PC-9 (cell line): ENCODE measurements at regions of chr17 and their contacts with region 1.

Region 1: GRCh38 chr17:72407336-72407909 is 286.6 kb downstream of the SOX9 start:
- DNase-seq: peak; percentile 90 to 98
- H3K4me3 ChIP-seq: peak overlapping the region; percentile 43; the same call in 1 of the 2 replicates
- H3K27ac ChIP-seq: peak overlapping the region; percentile 99
- H3K4me1 ChIP-seq: peaks cover 71% of the 10 kb centered on the region
- H3K27me3 ChIP-seq: no peaks in the 10 kb centered on the region
- CTCF ChIP-seq: no peak

Region 2: DNA sequence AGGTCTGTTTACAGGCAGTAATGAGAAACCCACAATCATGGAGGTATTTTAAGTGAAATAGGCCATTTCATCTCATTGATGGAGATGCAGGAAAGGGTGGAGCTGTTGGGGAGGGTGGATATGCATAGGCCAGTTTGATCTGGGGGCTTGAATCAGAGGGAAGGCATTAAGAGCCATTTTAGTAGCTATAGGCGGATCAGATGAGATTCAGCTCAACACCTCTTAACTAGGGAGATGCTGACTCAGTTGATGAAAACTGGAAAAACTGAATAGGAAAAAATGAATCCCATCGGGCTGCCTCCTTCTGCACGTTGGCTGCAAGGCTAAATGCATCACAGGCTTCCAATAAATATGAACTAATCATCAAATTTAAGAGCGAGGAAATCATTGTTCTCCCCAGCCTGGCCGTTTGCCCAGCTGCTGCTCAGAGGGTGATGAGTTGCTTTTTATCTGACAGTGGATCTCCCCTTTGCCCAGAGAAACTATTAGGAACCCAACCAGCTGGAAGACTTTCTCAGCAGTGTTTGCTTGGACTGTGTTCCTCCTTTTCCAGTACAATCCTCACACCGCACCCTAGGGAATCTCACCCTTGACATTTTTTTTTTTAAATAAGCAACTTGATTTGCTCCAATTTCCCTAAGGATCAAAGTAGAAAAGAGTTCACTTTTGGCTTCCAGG is 137.0 kb before region 1 on chr17:
- CTCF ChIA-PET with region 1: no interaction called
- POLR2A ChIA-PET with region 1: no interaction called
- intact Hi-C with region 1: loop called (anchors 5 kb)
- DNase-seq: peak; percentile 62 to 82
- H3K4me3 ChIP-seq: no peak overlapping the region
- H3K27ac ChIP-seq: 0 out of 2 replicates have a peak overlapping the region, but pooled peaks have one; percentile 13
- H3K4me1 ChIP-seq: peaks cover 35% of the 10 kb centered on the region
- H3K27me3 ChIP-seq: no peaks in the 10 kb centered on the region
- CTCF ChIP-seq: no peak

Region 3: DNA sequence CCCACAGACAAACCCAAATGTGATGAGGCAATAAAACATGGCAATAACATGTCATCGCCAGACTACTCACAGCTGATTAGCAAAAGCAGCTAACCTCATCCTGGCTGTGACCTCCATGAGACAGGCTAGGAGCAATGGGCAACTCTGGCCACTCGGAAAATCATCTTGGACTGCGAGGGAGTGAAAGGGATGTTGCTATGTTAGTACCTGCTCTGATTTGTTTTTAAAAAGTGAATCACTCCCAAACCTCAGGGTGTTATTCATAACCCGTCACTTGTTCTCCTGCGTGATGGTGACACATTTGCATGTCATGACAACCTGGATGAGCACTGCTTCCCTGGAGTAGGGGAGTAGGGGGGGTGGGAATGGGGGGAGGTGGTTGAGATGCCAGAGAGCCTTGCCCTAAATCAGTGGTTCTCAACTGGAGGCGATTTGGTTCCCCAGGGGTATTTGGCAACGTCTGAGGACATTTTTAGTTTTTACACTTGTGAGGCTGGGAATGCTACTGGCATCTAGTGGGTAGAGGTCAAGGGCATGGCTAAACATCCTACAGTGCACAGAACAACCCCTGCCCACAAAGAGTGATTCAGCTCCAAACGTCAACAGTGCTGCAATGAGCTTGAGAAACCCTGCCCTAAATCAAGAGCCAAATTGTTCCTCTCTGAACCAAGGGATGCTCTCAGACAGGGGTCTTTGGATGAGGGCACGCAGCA is 44.9 kb before region 1 on chr17:
- CTCF ChIA-PET with region 1: no interaction called
- POLR2A ChIA-PET with region 1: interaction called, 3 read pairs
- intact Hi-C with region 1: loop called (anchors 1 kb)
- DNase-seq: peak in 1 of 2 experiments; percentile 79
- H3K4me3 ChIP-seq: no peak overlapping the region
- H3K27ac ChIP-seq: peak overlapping the region; percentile 41
- H3K4me1 ChIP-seq: peaks cover 44% of the 10 kb centered on the region
- H3K27me3 ChIP-seq: no peaks in the 10 kb centered on the region
- CTCF ChIP-seq: no peak

Region 4: DNA sequence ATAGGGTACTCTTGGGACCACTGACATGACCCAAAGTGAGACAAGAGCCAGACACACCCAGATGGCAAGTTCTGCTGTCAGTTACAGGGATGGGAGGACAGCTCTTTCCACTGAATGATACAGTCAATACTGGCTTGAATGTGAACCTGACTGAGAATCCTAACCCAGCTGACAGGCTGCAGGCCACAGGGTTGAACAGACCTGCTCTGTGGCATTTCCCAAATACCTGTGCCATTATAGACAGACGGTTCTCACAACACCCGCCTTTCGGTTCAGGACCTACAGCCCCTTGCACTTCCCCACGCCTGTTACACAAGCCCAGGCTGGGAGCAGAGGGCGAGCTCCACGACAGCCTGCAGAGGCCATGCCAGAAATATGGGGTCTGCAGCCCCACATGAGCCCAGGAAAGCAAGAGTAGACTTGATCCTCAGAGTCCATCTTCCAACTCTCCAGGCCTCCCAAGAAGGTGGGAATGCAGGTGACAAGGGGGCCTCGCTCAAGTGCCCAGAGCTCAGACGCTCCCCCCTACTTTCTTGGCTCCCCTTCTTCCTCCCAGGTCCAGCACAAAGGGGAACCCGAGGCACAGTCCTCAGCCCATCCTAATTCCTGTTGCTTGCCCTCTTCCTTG is 27.7 kb after region 1 on chr17:
- CTCF ChIA-PET with region 1: interaction called, 5 read pairs
- POLR2A ChIA-PET with region 1: interaction called, 15 read pairs
- intact Hi-C with region 1: no loop called
- DNase-seq: peak; percentile 46 to 81
- H3K4me3 ChIP-seq: no peak overlapping the region
- H3K27ac ChIP-seq: peak overlapping the region; percentile 53
- H3K4me1 ChIP-seq: peaks cover 23% of the 10 kb centered on the region
- H3K27me3 ChIP-seq: no peaks in the 10 kb centered on the region
- CTCF ChIP-seq: no peak

Region 5: GRCh38 chr17:72510397-72511016 is 103.1 kb after region 1 on chr17:
- CTCF ChIA-PET with region 1: no interaction called
- POLR2A ChIA-PET with region 1: no interaction called
- intact Hi-C with region 1: no loop called
- DNase-seq: no peak
- H3K4me3 ChIP-seq: no peak overlapping the region
- H3K27ac ChIP-seq: peak overlapping the region; percentile 54
- H3K4me1 ChIP-seq: peaks cover 18% of the 10 kb centered on the region
- H3K27me3 ChIP-seq: no peaks in the 10 kb centered on the region
- CTCF ChIP-seq: no peak